PC-9 (cell line): ENCODE measurements at regions of chr3 and their contacts with region 1.

Region 1: GRCh38 chr3:149581681-149582370 is 76.0 kb downstream of the WWTR1 start:
- DNase-seq: peak; percentile 87 to 97
- H3K4me3 ChIP-seq: peak overlapping the region; percentile 37; the same call in 1 of the 2 replicates
- H3K27ac ChIP-seq: peak overlapping the region; percentile 98
- H3K4me1 ChIP-seq: peaks cover 94% of the 10 kb centered on the region
- H3K27me3 ChIP-seq: no peaks in the 10 kb centered on the region
- CTCF ChIP-seq: no peak

Region 2: DNA sequence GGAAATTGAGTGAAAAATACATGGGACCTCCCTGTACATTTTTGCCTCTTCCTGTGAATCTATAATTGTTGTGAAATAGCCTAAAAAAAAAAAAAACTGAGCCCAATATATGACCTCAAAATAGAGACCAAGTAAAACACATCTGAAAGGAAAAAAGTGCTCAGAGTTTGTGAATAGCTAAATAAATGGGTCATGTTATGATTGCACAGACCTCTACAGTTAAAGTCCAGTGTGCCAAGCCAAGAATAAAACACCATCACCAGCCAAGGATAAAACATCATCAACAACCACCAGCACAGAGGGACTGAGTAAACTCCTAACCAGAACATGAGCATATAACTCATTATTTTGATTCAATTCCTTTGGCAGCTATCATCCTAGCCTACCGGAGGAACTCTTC is 999.7 kb before region 1 on chr3:
- CTCF ChIA-PET with region 1: no interaction called
- POLR2A ChIA-PET with region 1: no interaction called
- intact Hi-C with region 1: no loop called
- DNase-seq: no peak
- H3K4me3 ChIP-seq: no peak overlapping the region
- H3K27ac ChIP-seq: no peak overlapping the region
- H3K4me1 ChIP-seq: no peaks in the 10 kb centered on the region
- H3K27me3 ChIP-seq: no peaks in the 10 kb centered on the region
- CTCF ChIP-seq: no peak

Region 3: DNA sequence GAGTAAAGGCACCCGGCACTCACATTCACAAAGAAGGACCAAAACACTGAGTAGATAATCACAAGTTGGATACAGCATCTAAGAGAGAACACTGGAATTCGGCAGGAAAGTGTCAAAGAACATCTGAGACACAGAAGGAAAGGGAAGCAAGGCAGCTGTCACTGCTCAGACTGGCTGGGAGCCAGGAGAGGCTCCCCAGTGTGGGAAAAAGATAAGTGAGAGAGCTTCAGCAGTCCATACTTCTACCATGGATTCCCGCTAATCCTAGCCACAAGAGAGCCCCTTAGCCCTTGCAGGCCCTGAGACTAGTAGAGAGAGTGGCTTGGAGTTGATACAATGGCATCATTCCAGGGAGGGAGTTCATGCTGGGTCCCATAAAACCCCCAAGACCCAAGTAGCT is 323.5 kb before region 1 on chr3:
- CTCF ChIA-PET with region 1: no interaction called
- POLR2A ChIA-PET with region 1: no interaction called
- intact Hi-C with region 1: no loop called
- DNase-seq: no peak
- H3K4me3 ChIP-seq: no peak overlapping the region
- H3K27ac ChIP-seq: no peak overlapping the region
- H3K4me1 ChIP-seq: no peaks in the 10 kb centered on the region
- H3K27me3 ChIP-seq: no peaks in the 10 kb centered on the region
- CTCF ChIP-seq: no peak

Region 4: GRCh38 chr3:149448331-149448831 is 133.4 kb before region 1 on chr3:
- CTCF ChIA-PET with region 1: no interaction called
- POLR2A ChIA-PET with region 1: no interaction called
- intact Hi-C with region 1: no loop called
- DNase-seq: peak; percentile 22 to 81
- H3K4me3 ChIP-seq: no peak overlapping the region
- H3K27ac ChIP-seq: peak overlapping the region; percentile 81
- H3K4me1 ChIP-seq: peaks cover 36% of the 10 kb centered on the region
- H3K27me3 ChIP-seq: no peaks in the 10 kb centered on the region
- CTCF ChIP-seq: no peak

Region 5: GRCh38 chr3:149473357-149474249 is 108.2 kb before region 1 on chr3:
- CTCF ChIA-PET with region 1: no interaction called
- POLR2A ChIA-PET with region 1: interaction called, 12 read pairs
- intact Hi-C with region 1: no loop called
- DNase-seq: peak; percentile 88 to 99
- H3K4me3 ChIP-seq: 0 out of 2 replicates have a peak overlapping the region, but pooled peaks have one; percentile 10
- H3K27ac ChIP-seq: peak overlapping the region; percentile 73
- H3K4me1 ChIP-seq: peaks cover 47% of the 10 kb centered on the region
- H3K27me3 ChIP-seq: no peaks in the 10 kb centered on the region
- CTCF ChIP-seq: no peak

Region 6: GRCh38 chr3:149519912-149520311 is 61.9 kb before region 1 on chr3:
- CTCF ChIA-PET with region 1: no interaction called
- POLR2A ChIA-PET with region 1: no interaction called
- intact Hi-C with region 1: no loop called
- DNase-seq: no peak
- H3K4me3 ChIP-seq: no peak overlapping the region
- H3K27ac ChIP-seq: no peak overlapping the region
- H3K4me1 ChIP-seq: no peaks in the 10 kb centered on the region
- H3K27me3 ChIP-seq: no peaks in the 10 kb centered on the region
- CTCF ChIP-seq: no peak

Region 7: DNA sequence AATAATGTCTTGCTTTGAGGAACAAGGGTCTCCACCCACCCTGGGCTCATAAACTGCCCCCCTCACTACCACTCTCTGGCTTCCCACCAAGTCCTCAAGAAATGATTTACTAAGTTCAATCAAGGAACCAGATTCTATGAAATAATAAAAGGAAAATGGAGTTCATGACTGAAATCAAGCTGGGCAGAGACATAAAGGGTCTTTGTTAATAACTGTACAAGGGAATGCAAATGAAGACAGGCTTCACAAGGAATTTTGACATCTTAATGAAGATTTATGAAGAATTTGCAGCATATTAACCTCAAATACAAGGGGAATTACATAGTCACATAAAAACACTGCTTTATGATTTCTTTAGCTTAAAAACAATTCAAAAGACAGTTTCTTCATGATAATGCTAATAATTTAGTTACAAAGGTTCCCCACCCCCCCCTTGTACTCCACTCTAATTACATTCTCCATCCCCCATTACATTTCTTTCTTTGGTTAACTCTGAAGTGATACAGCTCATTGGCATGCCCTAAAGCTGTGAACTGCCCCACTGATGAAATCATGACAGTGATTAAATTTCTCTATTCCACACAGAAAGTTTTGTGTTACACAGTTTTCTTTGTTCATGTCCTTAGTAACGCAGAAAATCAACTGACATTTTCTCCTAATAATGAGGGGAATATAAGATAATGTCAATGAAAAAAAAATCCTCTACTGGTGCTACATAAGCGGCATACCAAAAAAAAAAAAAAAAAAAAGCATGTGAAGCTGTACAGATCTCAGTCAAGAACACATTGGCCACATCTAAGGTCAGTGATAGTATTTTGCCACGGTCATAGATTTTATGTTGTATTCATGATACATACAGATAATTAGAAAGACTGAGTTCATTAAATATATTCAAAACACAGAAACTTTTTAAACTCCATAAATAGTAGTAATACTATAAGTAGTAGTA is 21.6 kb after region 1 on chr3:
- CTCF ChIA-PET with region 1: interaction called, 3 read pairs
- POLR2A ChIA-PET with region 1: no interaction called
- intact Hi-C with region 1: loop called (anchors 2 kb)
- DNase-seq: no peak
- H3K4me3 ChIP-seq: no peak overlapping the region
- H3K27ac ChIP-seq: peak overlapping the region; percentile 62
- H3K4me1 ChIP-seq: peaks cover 44% of the 10 kb centered on the region
- H3K27me3 ChIP-seq: no peaks in the 10 kb centered on the region
- CTCF ChIP-seq: no peak

Region 8: DNA sequence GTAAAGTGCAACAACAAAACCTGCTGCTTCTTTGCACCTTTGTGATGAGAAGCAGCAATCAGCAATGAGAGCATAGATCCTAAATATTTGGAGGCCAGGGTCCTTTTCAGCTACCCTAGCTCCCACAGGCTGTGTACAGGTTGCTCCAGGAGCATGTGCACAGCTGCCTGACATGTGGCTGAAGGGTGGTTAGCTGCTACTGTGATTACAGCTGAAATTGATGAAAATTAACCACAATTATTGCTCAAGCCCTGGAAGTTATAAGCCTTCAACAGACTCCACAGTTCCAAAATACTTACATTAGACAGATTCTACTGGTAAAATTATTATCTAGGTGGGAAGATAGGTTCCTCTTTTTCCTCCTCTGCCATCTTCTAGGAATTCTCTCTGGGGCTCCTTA is 142.0 kb after region 1 on chr3:
- CTCF ChIA-PET with region 1: interaction called, 12 read pairs
- POLR2A ChIA-PET with region 1: no interaction called
- intact Hi-C with region 1: no loop called
- DNase-seq: no peak
- H3K4me3 ChIP-seq: no peak overlapping the region
- H3K27ac ChIP-seq: no peak overlapping the region
- H3K4me1 ChIP-seq: no peaks in the 10 kb centered on the region
- H3K27me3 ChIP-seq: no peaks in the 10 kb centered on the region
- CTCF ChIP-seq: no peak

Region 9: DNA sequence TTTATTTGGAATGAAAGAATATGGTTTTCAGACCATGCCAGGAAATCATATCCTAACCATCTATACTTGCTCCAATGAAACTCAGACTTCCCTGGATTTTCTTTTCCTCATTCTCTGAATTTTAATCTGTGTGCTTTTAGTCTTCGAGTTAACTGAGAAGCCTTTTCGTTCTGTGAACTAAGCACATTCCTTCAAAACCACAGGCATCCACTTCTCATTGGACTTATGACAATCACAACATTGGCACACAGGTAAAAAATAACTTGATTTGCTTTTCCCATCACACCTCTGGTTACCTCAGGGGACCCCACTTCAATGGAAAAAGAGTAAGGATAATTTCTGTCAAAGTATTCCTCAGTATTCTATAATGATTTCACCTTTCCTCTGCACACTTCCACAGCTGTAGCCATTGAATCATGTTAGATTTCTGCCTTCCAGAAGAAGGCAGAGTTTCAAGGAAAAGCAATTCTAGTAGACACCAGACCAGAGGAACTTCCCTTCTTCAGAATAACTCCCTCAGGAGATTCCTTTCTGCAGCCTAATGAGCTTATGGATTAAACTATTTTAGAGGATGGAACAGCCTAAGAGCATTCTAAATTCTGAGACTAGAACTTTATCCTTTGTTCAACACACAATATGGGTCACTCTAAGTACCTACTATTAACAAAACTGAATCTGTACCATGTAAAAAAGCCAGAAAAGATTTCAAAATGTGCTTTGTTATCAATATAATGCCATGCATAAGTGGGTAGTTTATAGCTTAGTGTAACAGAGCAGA is 154.5 kb after region 1 on chr3:
- CTCF ChIA-PET with region 1: no interaction called
- POLR2A ChIA-PET with region 1: no interaction called
- intact Hi-C with region 1: loop called (anchors 1 kb)
- DNase-seq: peak; percentile 57 to 90
- H3K4me3 ChIP-seq: no peak overlapping the region
- H3K27ac ChIP-seq: peak overlapping the region; percentile 81
- H3K4me1 ChIP-seq: peaks cover 27% of the 10 kb centered on the region
- H3K27me3 ChIP-seq: no peaks in the 10 kb centered on the region
- CTCF ChIP-seq: no peak